Activated T-helper 2 cell treated with anti-CD3 and anti-CD28 coated beads, Interferon-gamma antibody, Interleukin-2, Interleukin-4, amounts not matched to agents 10 μg/mL and 5 μg/mL and 100 μg/mL, durations not matched to agents 14 hours and 24 hours and 36 hours (primary cell): ENCODE measurements at regions of chr7 and their contacts with region 1.

Region 1: DNA sequence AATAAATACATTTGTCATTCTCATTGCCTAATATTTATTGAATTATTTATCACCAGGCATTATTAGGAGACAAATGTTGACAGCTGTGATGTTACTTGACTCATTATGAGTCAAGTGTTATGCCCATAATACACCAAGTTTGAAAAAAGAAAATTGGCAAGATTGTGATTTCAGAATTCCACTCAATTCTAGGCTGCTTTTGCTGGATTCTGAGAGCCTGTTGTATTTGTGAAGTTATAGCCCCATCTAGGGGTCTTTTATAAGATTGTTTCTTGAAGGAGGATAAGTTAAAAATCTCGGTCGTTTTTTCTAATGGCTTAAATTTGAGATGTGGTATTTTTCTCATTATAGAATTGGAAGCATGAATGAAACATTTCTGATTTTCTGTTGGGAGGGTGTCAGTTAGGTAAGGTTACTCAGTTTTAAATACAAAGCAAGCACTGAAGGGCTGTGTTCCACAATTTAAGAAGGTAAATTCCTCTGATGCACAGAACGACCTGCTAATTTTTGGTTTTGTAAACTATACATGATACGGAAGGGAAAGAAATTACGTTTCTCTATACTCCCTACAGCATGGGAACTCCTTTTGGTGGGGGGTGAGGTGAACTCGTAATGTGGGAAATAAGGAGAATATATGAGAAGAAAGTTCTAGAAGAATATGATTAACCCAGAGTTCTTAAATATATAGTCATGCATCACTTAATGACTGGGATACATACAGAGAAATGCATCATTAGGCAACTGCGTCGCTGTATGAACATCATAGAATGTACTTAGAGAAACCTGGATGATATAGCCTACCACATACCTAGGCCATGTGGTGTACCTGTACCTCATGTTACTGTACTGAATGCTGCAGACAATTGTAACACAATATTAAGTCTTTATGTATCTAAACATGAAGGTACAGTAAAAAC is 2.6 kb downstream of the STK31 start:
- DNase-seq: no peak
- H3K4me3 Mint-ChIP-seq: no peak overlapping the region
- H3K27ac Mint-ChIP-seq: no peak overlapping the region
- H3K4me1 Mint-ChIP-seq: no peaks in the 10 kb centered on the region
- H3K27me3 Mint-ChIP-seq: peaks cover 2% of the 10 kb centered on the region

Region 2: DNA sequence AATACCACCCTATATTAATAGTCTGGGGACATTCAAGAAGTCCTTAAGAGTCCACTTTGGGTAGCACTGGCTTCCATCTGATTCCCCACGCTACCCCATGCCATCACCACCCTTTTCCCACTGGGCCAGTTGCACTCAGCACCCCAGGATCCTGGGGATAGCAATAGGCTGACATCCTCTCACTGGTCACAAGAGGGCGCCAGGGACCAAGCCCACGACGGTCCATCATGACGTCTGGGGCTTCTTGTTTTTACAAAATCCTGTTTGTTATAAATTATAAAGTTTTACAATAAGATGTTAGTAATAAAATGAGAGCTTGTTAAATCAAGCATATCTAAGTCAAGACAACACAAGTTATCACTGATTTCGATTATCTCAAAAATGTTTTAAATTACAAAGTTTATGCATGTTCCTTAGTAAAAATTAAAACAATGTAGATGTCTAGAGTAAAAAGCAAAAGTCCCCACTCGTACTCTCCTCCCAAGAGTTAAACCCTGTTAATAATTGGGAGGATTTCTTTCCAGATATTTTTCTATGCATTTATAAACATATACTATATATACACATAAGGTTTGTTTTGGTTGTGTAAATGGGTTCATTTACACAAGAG is 450.7 kb before region 1 on chr7:
- intact Hi-C with region 1: loop called (anchors 2 kb)
- DNase-seq: peak; percentile 46
- H3K4me3 Mint-ChIP-seq: no peak overlapping the region
- H3K27ac Mint-ChIP-seq: no peak overlapping the region
- H3K4me1 Mint-ChIP-seq: no peaks in the 10 kb centered on the region
- H3K27me3 Mint-ChIP-seq: peaks cover 19% of the 10 kb centered on the region

Region 3: DNA sequence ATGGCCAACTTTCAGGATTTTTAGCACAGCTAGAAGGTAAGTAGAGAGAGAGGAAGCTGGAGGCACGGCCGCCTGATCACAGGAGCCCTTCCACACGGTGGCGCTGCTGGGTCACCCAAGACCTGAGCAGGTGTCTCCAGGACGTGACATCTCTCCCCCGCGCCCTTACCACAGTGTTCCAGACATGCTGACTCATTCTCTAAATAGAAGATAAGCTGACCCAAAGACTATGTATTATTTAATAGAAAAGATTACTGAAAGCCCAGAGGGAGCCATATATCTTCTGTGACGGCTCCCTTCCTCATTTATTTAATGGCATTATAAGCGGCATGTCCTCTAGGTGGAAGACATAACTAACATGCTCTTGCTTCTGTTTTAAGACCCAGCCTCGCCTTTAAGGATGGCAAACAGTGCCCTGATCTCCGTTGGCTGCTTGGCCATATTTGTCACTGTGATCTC is 439.5 kb before region 1 on chr7:
- intact Hi-C with region 1: no loop called
- DNase-seq: peak; percentile 84
- H3K4me3 Mint-ChIP-seq: peak overlapping the region; percentile 55
- H3K27ac Mint-ChIP-seq: peak overlapping the region; percentile 21
- H3K4me1 Mint-ChIP-seq: peaks cover 20% of the 10 kb centered on the region
- H3K27me3 Mint-ChIP-seq: peaks cover 3% of the 10 kb centered on the region

Region 4: DNA sequence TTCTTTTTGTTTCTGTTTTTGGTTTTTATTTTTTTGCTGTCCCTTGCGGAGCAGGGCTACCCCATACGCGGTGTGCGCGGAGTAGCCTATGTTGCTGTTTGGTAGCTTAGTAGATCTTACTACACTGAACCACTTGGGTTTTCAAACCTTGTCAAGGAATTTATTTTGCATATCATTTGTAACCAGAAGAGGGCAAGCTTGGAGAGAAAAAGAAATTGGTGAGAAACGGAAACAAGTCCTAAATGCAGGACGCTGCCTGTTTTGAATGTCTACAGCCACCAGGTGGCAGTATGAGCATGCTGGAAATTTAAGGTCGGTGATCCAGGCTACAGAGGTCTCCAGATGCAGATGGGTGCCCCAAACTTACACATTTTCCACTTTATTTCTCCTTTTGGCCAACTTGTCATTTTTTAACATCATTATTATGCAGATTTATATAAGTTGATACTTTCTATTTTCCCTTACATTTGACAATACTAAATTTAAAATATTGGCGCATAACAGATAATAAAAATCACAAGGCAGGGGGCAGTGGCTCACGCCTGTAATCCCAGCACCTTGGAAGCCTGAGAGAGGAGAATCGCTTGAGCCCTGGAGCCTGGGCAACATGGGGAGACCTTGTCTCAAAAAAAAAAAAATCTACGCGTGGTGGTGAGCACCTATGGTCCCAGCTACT is 165.6 kb before region 1 on chr7:
- intact Hi-C with region 1: loop called (anchors 1 kb)
- DNase-seq: peak; percentile 72
- H3K4me3 Mint-ChIP-seq: no peak overlapping the region
- H3K27ac Mint-ChIP-seq: no peak overlapping the region
- H3K4me1 Mint-ChIP-seq: peaks cover 7% of the 10 kb centered on the region
- H3K27me3 Mint-ChIP-seq: peaks cover 7% of the 10 kb centered on the region

Region 5: DNA sequence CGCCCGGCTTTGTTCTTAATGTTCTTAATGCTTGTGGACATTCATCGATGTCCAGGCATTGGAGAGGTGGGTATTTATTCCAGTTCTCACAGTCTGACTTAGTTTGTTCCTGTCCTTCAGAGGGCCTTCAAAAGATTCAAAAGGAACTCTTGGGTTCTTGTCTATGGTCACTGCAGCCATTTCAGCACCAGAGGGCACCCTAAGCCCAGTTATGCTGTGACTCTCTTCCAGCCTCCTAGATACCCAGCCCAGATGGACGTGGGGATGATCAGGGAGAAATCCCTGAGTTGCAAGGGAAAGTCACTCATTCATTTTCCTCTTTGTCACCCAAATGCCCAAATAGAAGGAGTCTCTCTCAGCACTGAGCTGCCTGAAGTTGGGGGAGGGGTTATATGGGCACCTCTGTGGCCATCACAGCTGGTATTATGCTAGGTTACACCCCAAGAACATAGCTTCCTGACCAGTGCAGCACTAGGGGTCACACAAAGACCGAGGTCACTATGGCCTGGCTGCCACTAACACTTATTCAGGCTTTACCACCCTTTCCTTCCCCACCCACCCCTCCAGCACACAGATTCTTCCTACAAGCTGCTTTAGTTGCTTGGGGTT is 141.9 kb before region 1 on chr7:
- intact Hi-C with region 1: loop called (anchors 1 kb)
- DNase-seq: peak; percentile 51
- H3K4me3 Mint-ChIP-seq: no peak overlapping the region
- H3K27ac Mint-ChIP-seq: no peak overlapping the region
- H3K4me1 Mint-ChIP-seq: no peaks in the 10 kb centered on the region
- H3K27me3 Mint-ChIP-seq: peaks cover 15% of the 10 kb centered on the region

Region 6: GRCh38 chr7:23618241-23618640 is 94.4 kb before region 1 on chr7:
- intact Hi-C with region 1: no loop called
- DNase-seq: no peak
- H3K4me3 Mint-ChIP-seq: no peak overlapping the region
- H3K27ac Mint-ChIP-seq: no peak overlapping the region
- H3K4me1 Mint-ChIP-seq: no peaks in the 10 kb centered on the region
- H3K27me3 Mint-ChIP-seq: no peaks in the 10 kb centered on the region